ENCODE measurements at regions of chr22 and their contacts with region 1.

Region 1: DNA sequence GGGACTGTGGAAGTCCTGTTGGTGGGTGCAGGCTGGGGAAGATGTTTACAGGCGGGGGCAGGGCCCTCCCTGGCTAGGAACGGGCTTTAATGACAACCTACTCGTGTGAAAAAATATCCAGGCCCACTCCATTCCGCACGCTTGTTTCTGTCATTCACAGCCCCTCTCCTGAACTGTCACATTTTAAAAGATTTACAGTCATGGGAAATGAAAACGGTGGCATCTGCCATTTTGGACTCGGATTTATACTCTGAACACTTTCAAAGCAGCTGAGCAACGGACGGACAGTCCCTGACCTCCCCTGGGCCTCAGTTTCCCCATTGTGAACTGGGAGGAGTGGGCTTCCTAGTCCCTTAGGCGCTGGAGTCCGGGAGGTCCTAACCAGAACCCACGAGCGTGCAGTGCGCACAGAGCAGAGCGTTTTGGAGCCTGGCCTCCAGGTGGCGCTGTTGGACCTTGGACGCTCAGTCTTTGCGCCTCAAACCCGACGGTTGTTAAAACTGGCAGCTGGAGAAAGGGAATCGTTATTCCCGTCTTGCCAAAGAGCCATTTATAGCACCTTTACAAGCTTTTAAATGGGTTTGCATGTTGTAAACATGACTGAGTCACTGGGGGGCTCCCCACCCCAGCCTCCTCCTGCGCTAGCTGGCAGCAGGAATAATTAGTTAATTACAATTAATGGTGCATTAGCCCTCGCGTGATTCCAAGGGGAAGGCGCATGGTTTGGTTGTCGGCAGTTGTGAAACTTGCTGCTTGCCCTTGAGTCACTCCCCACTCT is 75.3 kb downstream of the FBLN1 start:
- DNase-seq: peak; percentile 73 to 88 (median 79)
- H3K4me3 ChIP-seq: peak overlapping the region in 1 of 59 donors; percentile 12
- H3K27ac ChIP-seq: no peak overlapping the region
- H3K27me3 ChIP-seq: peaks cover 0 to 17% (median 0%) of the 10 kb centered on the region in 45 donors
- CTCF ChIP-seq: peak; percentile 47 to 97 (median 94)

Region 2: DNA sequence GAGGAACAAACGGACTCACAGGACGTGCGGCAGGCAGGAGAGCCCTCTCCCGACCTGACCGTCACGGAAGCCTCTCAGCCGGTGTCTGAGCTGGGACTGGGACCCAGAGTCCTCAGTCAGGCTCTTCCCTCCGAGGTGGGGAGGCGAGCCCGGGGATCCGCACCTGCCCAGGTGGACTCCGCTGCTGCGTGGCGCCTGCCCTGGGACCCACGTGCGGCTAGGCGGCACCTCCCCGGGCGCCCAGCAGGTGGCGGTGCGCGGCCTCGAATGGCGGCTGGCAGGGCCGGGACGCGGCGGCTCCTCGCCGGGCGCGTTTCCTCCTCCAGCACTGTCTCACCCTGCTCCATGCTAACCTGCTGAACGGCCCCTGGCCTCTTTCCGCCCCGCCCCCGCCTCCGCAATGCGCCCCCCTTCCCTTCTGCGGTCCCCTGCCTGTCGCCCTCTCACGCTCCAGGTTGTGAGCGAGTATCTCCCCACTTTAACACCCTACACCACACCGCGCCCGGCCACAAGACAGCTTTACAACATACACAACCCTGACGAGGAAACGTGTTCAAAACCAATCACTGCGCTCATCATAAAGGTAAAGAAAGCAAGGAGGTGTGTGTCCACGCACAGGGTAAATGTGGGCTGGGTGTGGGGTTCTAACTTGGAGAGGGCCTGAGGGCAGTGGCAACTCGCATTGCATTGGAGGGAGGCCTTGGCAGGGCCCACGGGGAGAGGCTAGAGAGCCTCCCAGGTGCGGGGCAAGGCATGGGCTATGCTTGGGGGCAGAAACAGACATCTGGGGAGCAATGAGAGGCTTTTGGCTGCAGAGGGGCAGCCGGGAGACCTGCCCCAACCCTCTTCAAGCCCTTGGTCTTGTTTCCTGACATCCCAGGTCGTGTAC is 67.8 kb after region 1 on chr22:
- intact Hi-C with region 1: loop called (anchors 5 kb)
- DNase-seq: peak in 9 of 10 donors; percentile 42 to 85 (median 62)
- H3K4me3 ChIP-seq: peak overlapping the region in 26 of 59 donors; percentile 2 to 45 (median 25)
- H3K27ac ChIP-seq: no peak overlapping the region
- H3K27me3 ChIP-seq: peaks cover 0 to 19% (median 0%) of the 10 kb centered on the region in 45 donors
- CTCF ChIP-seq: peak; percentile 74 to 99 (median 96)

Region 3: GRCh38 chr22:45863981-45864751 is 286.2 kb after region 1 on chr22:
- intact Hi-C with region 1: loop called (anchors 2 to 10 kb)
- DNase-seq: peak in 7 of 10 donors; percentile 61 to 75 (median 70)
- H3K4me3 ChIP-seq: no peak overlapping the region
- H3K27ac ChIP-seq: peak overlapping the region in 7 of 59 donors; percentile 26 to 77 (median 37)
- H3K27me3 ChIP-seq: peaks cover 0 to 16% (median 2%) of the 10 kb centered on the region in 45 donors
- CTCF ChIP-seq: peak; percentile 70 to 96 (median 88)